Left ventricle myocardium superior (tissue), 1 donor: ENCODE measurements at regions of chr15 and their contacts with region 1.

Region 1: DNA sequence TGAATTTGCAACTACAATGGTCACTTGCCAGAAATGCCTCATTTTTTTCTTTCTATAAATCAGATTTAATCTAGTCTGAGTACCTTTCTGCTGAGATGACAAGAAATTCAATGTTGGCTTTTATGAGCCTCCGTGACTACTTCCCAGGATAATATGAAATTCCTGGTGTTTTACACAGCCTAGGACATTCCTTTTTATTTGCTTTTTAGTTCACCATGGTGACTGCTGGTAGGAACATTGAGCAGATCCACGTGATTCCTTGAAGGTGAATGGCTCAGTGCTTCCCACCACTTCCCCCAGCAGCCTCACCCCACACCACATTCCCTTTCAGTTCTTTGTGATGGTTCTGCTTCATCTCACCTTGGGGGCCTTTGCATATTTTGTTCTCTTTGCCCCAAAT is 4.3 kb upstream of the NPTN start:
- DNase-seq: no peak
- ATAC-seq: no peak

Region 2: GRCh38 chr15:73368301-73369136 is 269.0 kb before region 1 on chr15 and contains the start of gene HCN4:
- intact Hi-C with region 1: no loop called
- DNase-seq: peak; percentile 80
- ATAC-seq: peak; percentile 78
- total RNA-seq, gene HCN4: 21.1 TPM

Region 3: GRCh38 chr15:73560501-73561117 is 76.9 kb before region 1 on chr15:
- intact Hi-C with region 1: loop called (anchors 5 kb)
- DNase-seq: no peak
- ATAC-seq: peak; percentile 52

Region 4: GRCh38 chr15:73700041-73700842 is 62.7 kb after region 1 on chr15:
- intact Hi-C with region 1: loop called (anchors 5 kb)
- DNase-seq: peak; percentile 80
- ATAC-seq: peak; percentile 46